Left ventricle myocardium superior (tissue), 1 donor: ENCODE measurements at regions of chr11 and their contacts with region 1.

Region 1: DNA sequence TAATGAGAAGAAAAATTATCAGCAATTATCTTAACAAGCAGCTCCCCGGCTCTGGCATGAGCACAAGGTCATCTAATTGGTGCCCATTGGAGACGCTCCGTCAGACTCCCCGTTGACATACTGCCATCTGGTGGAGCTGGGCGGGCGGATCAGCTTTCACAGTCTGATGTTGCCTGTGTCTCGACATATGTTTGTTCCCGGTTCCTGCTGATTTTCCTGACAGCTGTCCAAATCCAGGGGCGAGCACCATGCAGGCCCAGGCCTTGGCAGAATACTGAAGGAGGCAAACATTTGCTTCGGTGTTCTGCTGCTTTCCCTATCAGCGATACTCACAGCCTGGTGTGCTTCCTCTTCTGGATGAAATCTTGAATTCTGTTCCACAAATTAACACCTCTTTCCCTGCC is 43.8 kb upstream of the BARX2 start:
- DNase-seq: peak; percentile 87
- ATAC-seq: peak; percentile 95

Region 2: GRCh38 chr11:129117595-129118350 is 214.1 kb before region 1 on chr11:
- intact Hi-C with region 1: loop called (anchors 2 kb)
- DNase-seq: no peak
- ATAC-seq: no peak